ENCODE measurements at regions of chr19 and their contacts with region 1.

Region 1: GRCh38 chr19:18594096-18594823 is 5.7 kb downstream of the REX1BD start:
- DNase-seq: peak; percentile 58 to 84
- H3K4me3 ChIP-seq: peak overlapping the region; percentile 42
- H3K4me3 Mint-ChIP-seq: peak overlapping the region; percentile 58
- H3K27ac Mint-ChIP-seq: peak overlapping the region; percentile 46
- H3K4me1 ChIP-seq: peaks cover 4% of the 10 kb centered on the region; the same call in 1 of the 2 replicates
- H3K4me1 Mint-ChIP-seq: peaks cover 7% of the 10 kb centered on the region
- H3K27me3 ChIP-seq: no peaks in the 10 kb centered on the region
- H3K27me3 Mint-ChIP-seq: no peaks in the 10 kb centered on the region
- CTCF ChIP-seq: peak; percentile 53 to 90

Region 2: GRCh38 chr19:18532168-18532890 is 61.9 kb before region 1 on chr19:
- CTCF ChIA-PET with region 1: interaction called, 16 read pairs
- POLR2A ChIA-PET with region 1: no interaction called
- intact Hi-C with region 1: no loop called
- DNase-seq: no peak
- H3K4me3 ChIP-seq: no peak overlapping the region
- H3K4me3 Mint-ChIP-seq: no peak overlapping the region
- H3K27ac Mint-ChIP-seq: no peak overlapping the region
- H3K4me1 ChIP-seq: no peaks in the 10 kb centered on the region
- H3K4me1 Mint-ChIP-seq: no peaks in the 10 kb centered on the region
- H3K27me3 ChIP-seq: no peaks in the 10 kb centered on the region
- H3K27me3 Mint-ChIP-seq: no peaks in the 10 kb centered on the region
- CTCF ChIP-seq: no peak

Region 3: DNA sequence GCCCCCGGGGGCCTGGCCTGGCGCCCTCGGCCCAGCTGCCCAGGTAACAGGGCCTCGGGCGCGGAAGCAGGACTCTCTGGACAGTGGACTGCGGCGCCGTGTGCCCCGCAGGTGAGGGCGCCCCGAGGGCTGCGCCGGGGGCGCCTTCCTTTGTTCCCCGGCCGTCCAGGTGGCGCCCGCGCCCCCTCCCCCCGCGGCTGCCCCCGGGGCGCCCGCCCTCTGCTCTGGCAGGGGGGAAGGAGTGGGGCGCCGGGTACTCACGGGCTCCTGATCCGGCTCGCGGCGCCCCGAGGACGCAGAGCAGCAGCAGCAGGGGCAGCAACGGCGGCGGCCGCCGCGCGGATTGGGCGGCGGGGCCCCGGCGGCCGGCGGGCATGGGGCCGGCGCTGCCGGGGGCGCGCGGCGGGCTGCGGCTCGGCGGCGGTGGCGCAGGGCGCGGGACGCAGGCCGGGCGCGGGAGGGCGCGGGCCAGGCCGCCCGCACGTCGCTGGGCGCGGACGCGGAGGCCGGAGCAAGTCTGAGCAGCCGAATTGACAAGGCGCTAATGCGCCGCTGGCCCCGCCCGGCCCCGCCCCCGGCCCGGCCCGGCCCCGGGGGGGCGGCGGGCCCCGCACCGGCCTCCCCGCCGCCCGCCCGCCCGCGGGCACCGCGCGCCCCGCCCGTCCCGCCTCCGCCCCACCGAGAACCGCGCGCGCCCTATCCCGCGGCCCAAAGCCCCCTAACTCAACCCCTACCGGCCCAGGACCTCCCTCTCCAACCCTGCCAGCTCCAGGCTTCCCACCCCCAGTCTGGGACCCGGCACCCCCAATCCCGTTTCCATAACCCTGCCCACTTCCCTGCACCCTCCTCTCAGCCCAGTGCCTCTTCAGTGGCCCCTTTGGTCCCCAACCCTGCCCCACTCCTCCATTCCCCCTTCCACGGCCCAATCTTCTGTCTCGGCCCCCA is 12.3 kb after region 1 on chr19 and contains the start of gene CRLF1:
- CTCF ChIA-PET with region 1: interaction called, 3 read pairs
- POLR2A ChIA-PET with region 1: interaction called, 3 read pairs
- intact Hi-C with region 1: loop called (anchors 1 kb)
- DNase-seq: no peak
- H3K4me3 ChIP-seq: peak within 1 kb of the TSS; percentile 23
- H3K4me3 Mint-ChIP-seq: peak within 1 kb of the TSS; percentile 66
- H3K27ac Mint-ChIP-seq: no peak within 1 kb of the TSS
- H3K4me1 ChIP-seq: peaks cover 26% of the 10 kb centered on the region
- H3K4me1 Mint-ChIP-seq: peaks cover 14% of the 10 kb centered on the region
- H3K27me3 ChIP-seq: peaks cover 9% of the 10 kb centered on the region
- H3K27me3 Mint-ChIP-seq: peaks cover 29% of the 10 kb centered on the region
- CTCF ChIP-seq: no peak
- total RNA-seq, gene CRLF1: 0.61 and 2.6 TPM in 2 replicates

Region 4: GRCh38 chr19:18636183-18636968 is 42.1 kb after region 1 on chr19:
- CTCF ChIA-PET with region 1: interaction called, 5 read pairs
- POLR2A ChIA-PET with region 1: interaction called, 10 read pairs
- intact Hi-C with region 1: loop called (anchors 2 kb)
- DNase-seq: peak; percentile 98 to 99
- H3K4me3 ChIP-seq: peak overlapping the region; percentile 98
- H3K4me3 Mint-ChIP-seq: peak overlapping the region; percentile 76
- H3K27ac Mint-ChIP-seq: peak overlapping the region; percentile 69
- H3K4me1 ChIP-seq: peaks cover 15% of the 10 kb centered on the region
- H3K4me1 Mint-ChIP-seq: peaks cover 15% of the 10 kb centered on the region
- H3K27me3 ChIP-seq: no peaks in the 10 kb centered on the region
- H3K27me3 Mint-ChIP-seq: peaks cover 6% of the 10 kb centered on the region
- CTCF ChIP-seq: no peak

Region 5: DNA sequence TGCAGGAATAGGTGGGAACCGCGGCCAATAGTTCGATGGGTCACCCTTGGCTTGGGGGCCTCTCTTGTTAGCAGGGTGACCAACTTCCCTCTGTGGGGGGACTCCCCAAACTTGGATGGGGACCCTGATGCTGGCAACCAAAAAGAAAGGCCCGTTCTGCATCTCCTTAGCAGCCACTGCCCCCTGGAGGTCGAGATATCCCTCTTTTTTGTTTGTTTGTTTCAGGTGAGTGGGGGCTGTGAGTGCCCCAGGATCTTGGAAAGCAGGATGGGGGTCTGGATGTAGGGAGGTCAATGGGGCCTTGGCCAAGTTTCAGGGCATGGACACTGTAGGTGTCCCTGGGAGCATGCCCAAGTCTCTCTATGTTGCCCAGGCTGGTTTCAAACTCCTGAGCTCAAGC is 81.5 kb after region 1 on chr19:
- CTCF ChIA-PET with region 1: interaction called, 4 read pairs
- POLR2A ChIA-PET with region 1: no interaction called
- intact Hi-C with region 1: loop called (anchors 1 kb)
- DNase-seq: peak in 1 of 2 experiments; percentile 31
- H3K4me3 ChIP-seq: no peak overlapping the region
- H3K4me3 Mint-ChIP-seq: no peak overlapping the region
- H3K27ac Mint-ChIP-seq: no peak overlapping the region
- H3K4me1 ChIP-seq: peaks cover 6% of the 10 kb centered on the region; the same call in 1 of the 2 replicates
- H3K4me1 Mint-ChIP-seq: no peaks in the 10 kb centered on the region
- H3K27me3 ChIP-seq: no peaks in the 10 kb centered on the region
- H3K27me3 Mint-ChIP-seq: no peaks in the 10 kb centered on the region
- CTCF ChIP-seq: peak in 1 of 2 experiments; percentile 13

Region 6: DNA sequence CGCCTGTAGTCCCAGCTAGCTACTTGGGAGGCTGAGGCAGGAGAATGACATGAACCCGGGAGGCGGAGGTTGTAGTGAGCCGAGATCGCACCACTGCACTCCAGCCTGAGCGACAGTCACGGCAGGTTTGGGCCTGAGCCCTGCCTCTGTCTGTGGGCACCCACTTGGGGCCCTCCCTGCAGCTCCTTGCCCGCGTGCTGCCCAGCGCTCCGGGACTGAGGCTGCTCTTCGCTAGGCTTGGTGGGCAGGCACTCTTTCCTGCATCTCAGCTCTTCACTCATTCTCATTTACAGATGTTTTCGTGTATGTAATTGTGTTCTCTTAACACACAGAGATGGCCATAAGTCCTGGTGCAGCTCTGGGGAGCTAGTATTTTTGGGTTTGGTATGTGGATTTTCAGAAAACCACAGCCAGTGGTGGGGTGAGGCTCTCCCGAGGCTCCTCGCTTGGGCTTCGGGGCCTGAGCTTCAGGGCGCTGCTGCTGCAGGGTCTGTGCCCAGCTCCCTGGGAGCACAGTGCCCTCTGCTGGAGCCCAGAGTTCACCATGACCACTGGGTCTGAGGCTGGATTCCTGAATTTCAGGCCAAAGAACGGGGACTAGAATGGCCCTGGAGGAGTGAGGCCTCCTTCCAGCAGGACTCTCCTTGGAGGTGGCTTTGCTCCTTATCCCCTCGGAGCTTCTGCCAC is 252.7 kb after region 1 on chr19:
- CTCF ChIA-PET with region 1: interaction called, 17 read pairs
- POLR2A ChIA-PET with region 1: no interaction called
- intact Hi-C with region 1: loop called (anchors 5 kb)
- DNase-seq: peak in 1 of 2 experiments; percentile 74
- H3K4me3 ChIP-seq: no peak overlapping the region
- H3K4me3 Mint-ChIP-seq: no peak overlapping the region
- H3K27ac Mint-ChIP-seq: peak overlapping the region; percentile 61
- H3K4me1 ChIP-seq: no peaks in the 10 kb centered on the region
- H3K4me1 Mint-ChIP-seq: peaks cover 4% of the 10 kb centered on the region
- H3K27me3 ChIP-seq: no peaks in the 10 kb centered on the region
- H3K27me3 Mint-ChIP-seq: no peaks in the 10 kb centered on the region
- CTCF ChIP-seq: peak; percentile 71 to 86

Measured in Caco-2 (cell line).